ENCODE measurements at regions of chr5 and their contacts with region 1.

Region 1: GRCh38 chr5:144170276-144171024 is at the starts of genes KCTD16 and YIPF5:
- DNase-seq: peak; percentile 94 to 99 (median 96)
- ATAC-seq: peak; percentile 96
- H3K4me3 ChIP-seq: peak within 1 kb of the TSS; percentile 81 to 94
- H3K4me3 Mint-ChIP-seq: peak within 1 kb of the TSS; percentile 89
- H3K27ac ChIP-seq: peak within 1 kb of the TSS; percentile 92 to 94
- H3K27ac Mint-ChIP-seq: peak within 1 kb of the TSS; percentile 96
- H3K4me1 ChIP-seq: peaks cover 21% of the 10 kb centered on the region
- H3K4me1 Mint-ChIP-seq: peaks cover 51% of the 10 kb centered on the region
- H3K27me3 ChIP-seq: no peaks in the 10 kb centered on the region
- H3K27me3 Mint-ChIP-seq: no peaks in the 10 kb centered on the region
- CTCF ChIP-seq: no peak
- total RNA-seq, gene KCTD16: not detected
- total RNA-seq, gene YIPF5: 62.8 to 64.6 TPM

Region 2: GRCh38 chr5:143222287-143223231 is 947.9 kb before region 1 on chr5:
- CTCF ChIA-PET with region 1: no interaction called
- POLR2A ChIA-PET with region 1: no interaction called
- intact Hi-C with region 1: loop called in 1 of 2 experiments (anchors 10 kb)
- DNase-seq: peak; percentile 30 to 92 (median 56)
- ATAC-seq: peak; percentile 85
- H3K4me3 ChIP-seq: no peak overlapping the region
- H3K4me3 Mint-ChIP-seq: peak overlapping the region; percentile 27
- H3K27ac ChIP-seq: peak overlapping the region; percentile 48 to 95
- H3K27ac Mint-ChIP-seq: peak overlapping the region; percentile 88
- H3K4me1 ChIP-seq: peaks cover 22% of the 10 kb centered on the region
- H3K4me1 Mint-ChIP-seq: peaks cover 38% of the 10 kb centered on the region
- H3K27me3 ChIP-seq: no peaks in the 10 kb centered on the region
- H3K27me3 Mint-ChIP-seq: no peaks in the 10 kb centered on the region
- CTCF ChIP-seq: no peak

Region 3: DNA sequence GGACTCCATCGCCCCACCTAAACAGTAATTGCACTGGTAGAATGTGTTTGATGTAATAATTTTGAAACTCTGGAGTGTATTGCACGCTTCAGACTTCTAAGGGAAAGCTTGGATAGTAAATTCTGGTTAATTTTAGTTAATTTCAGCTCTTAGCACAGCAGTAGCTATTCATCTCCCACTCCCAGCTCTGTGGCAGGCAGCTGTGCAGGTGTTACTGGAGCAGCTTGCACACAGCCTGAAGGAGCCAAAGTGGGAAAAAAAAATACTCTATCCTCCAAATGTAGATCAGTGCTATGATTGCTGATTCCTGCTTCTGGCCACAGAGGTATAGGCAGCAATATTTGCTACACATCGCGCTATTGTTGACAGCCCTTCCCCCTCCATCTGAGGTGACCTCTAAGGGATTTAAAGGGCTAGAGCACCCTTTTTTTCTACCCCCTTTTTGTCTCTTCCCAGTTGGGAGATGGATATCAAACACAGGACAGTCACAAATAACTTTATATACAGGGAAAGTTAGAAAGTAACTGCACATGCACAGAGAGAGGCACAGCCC is 97.6 kb after region 1 on chr5:
- CTCF ChIA-PET with region 1: no interaction called
- POLR2A ChIA-PET with region 1: no interaction called
- intact Hi-C with region 1: no loop called
- DNase-seq: no peak
- ATAC-seq: no peak
- H3K4me3 ChIP-seq: no peak overlapping the region
- H3K4me3 Mint-ChIP-seq: no peak overlapping the region
- H3K27ac ChIP-seq: no peak overlapping the region
- H3K27ac Mint-ChIP-seq: no peak overlapping the region
- H3K4me1 ChIP-seq: no peaks in the 10 kb centered on the region
- H3K4me1 Mint-ChIP-seq: no peaks in the 10 kb centered on the region
- H3K27me3 ChIP-seq: peaks cover 0 to 3% of the 10 kb centered on the region in 2 experiments
- H3K27me3 Mint-ChIP-seq: peaks cover 23% of the 10 kb centered on the region
- CTCF ChIP-seq: no peak

Measured in CD8-positive, alpha-beta T cell (primary cell).